MCF 10A (cell line): ENCODE measurements at regions of chr7 and their contacts with region 1.

Region 1: GRCh38 chr7:135645296-135645904 is 16.9 kb upstream of the STMP1 start:
- DNase-seq: peak; percentile 57
- H3K4me3 Mint-ChIP-seq: no peak overlapping the region
- H3K27ac Mint-ChIP-seq: no peak overlapping the region
- H3K4me1 Mint-ChIP-seq: no peaks in the 10 kb centered on the region
- H3K27me3 Mint-ChIP-seq: no peaks in the 10 kb centered on the region
- CTCF ChIP-seq: peak; percentile 46

Region 2: DNA sequence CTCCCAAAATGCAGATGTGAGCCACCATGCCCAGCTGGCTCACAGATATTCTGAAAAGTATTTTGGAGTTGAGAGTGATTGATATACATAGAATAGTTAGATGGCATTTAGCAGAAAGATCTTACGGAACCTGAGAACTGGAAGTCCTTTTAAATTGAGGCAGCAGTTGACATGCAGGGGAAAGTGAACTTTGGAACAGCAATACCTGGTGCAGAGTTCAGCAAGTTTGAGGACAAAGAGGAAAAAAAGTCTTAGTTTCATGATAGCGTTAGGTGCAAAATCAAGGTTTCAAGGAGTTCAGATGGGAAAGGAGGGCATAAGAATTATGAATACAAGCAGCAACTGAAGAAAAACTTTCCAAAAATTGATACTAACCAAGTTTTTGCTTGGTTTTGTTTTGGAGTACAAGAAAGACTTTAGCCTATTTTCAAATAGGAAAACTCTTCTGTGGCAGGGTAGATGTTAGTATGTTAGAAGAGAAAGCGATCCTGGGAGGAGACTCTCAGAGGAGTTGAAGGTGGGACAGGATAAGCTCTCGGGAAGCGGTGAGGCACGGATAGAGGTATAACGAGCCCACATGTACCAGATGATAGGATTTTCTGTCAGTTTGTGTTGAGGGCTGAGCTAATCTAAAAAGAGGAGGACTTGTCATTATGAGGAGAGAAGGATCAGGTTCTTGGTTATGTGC is 11.1 kb before region 1 on chr7:
- CTCF ChIA-PET with region 1: interaction called, 134 read pairs
- POLR2A ChIA-PET with region 1: interaction called, 4 read pairs
- intact Hi-C with region 1: no loop called
- DNase-seq: no peak
- H3K4me3 Mint-ChIP-seq: no peak overlapping the region
- H3K27ac Mint-ChIP-seq: peak overlapping the region; percentile 4
- H3K4me1 Mint-ChIP-seq: no peaks in the 10 kb centered on the region
- H3K27me3 Mint-ChIP-seq: no peaks in the 10 kb centered on the region
- CTCF ChIP-seq: no peak

Region 3: GRCh38 chr7:136452948-136453347 is 807.5 kb after region 1 on chr7:
- CTCF ChIA-PET with region 1: no interaction called
- POLR2A ChIA-PET with region 1: no interaction called
- intact Hi-C with region 1: no loop called
- DNase-seq: no peak
- H3K4me3 Mint-ChIP-seq: no peak overlapping the region
- H3K27ac Mint-ChIP-seq: no peak overlapping the region
- H3K4me1 Mint-ChIP-seq: no peaks in the 10 kb centered on the region
- H3K27me3 Mint-ChIP-seq: no peaks in the 10 kb centered on the region
- CTCF ChIP-seq: no peak